Activated CD8-positive, alpha-beta T cell treated with anti-CD3 and anti-CD28 coated beads, Interleukin-2, amount 10 ng/mL, durations not matched to agents 7 days and 5 days (primary cell): ENCODE measurements at regions of chr14 and their contacts with region 1.

Region 1: GRCh38 chr14:59964251-59965007 is 44.5 kb downstream of the LRRC9 start:
- DNase-seq: peak; percentile 23
- ATAC-seq: peak; percentile 34
- H3K4me3 Mint-ChIP-seq: peak overlapping the region; percentile 76
- H3K27ac Mint-ChIP-seq: peak overlapping the region; percentile 84
- H3K4me1 Mint-ChIP-seq: peaks cover 20% of the 10 kb centered on the region
- H3K27me3 Mint-ChIP-seq: peaks cover 9% of the 10 kb centered on the region

Region 2: GRCh38 chr14:59836116-59836515 is 128.3 kb before region 1 on chr14:
- CTCF ChIA-PET with region 1: no interaction called
- POLR2A ChIA-PET with region 1: no interaction called
- DNase-seq: no peak
- ATAC-seq: no peak
- H3K4me3 Mint-ChIP-seq: no peak overlapping the region
- H3K27ac Mint-ChIP-seq: no peak overlapping the region
- H3K4me1 Mint-ChIP-seq: no peaks in the 10 kb centered on the region
- H3K27me3 Mint-ChIP-seq: peaks cover 27% of the 10 kb centered on the region

Region 3: DNA sequence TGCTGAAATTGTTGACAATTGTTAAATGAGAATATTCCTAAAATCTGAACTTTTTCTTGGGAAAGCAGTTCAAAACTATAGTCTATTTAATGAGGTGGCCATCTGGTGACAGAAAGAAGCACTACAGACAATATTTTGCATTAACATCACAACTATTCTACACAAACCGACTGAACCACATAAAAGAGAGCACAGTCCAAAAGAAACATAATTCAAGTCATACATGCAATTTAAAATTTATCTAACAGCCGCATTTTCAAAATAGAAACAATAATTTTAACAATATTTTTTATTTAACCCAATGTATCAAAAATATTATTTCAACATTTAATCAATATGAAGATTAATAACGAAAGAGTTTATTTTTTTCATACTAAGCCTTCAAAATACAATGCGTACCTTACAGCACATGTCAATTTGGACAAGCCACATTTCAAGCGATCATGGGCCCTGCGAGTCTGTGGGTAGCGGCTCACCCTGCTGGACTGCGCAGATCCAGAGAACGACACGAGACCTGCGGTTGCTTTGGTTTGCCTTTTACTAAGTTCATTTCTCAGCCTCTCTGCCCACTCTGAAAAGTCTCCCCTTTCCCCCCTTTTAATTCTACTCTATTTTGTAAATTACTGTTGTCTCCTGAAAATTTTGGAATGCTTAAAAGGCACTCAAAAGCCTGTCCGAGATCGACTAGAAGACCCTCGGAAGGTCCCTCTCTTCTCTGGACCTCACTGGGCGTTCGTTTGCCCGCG is 45.4 kb before region 1 on chr14:
- CTCF ChIA-PET with region 1: interaction called, 13 read pairs
- POLR2A ChIA-PET with region 1: no interaction called
- DNase-seq: peak; percentile 35
- ATAC-seq: peak; percentile 73
- H3K4me3 Mint-ChIP-seq: peak overlapping the region; percentile 60
- H3K27ac Mint-ChIP-seq: no peak overlapping the region
- H3K4me1 Mint-ChIP-seq: peaks cover 11% of the 10 kb centered on the region
- H3K27me3 Mint-ChIP-seq: peaks cover 27% of the 10 kb centered on the region

Region 4: GRCh38 chr14:59983048-59983447 is 18.6 kb after region 1 on chr14:
- CTCF ChIA-PET with region 1: interaction called, 14 read pairs
- POLR2A ChIA-PET with region 1: no interaction called
- DNase-seq: no peak
- ATAC-seq: no peak
- H3K4me3 Mint-ChIP-seq: no peak overlapping the region
- H3K27ac Mint-ChIP-seq: no peak overlapping the region
- H3K4me1 Mint-ChIP-seq: no peaks in the 10 kb centered on the region
- H3K27me3 Mint-ChIP-seq: no peaks in the 10 kb centered on the region

Region 5: GRCh38 chr14:60079724-60080123 is 115.3 kb after region 1 on chr14:
- CTCF ChIA-PET with region 1: no interaction called
- POLR2A ChIA-PET with region 1: no interaction called
- DNase-seq: no peak
- ATAC-seq: no peak
- H3K4me3 Mint-ChIP-seq: no peak overlapping the region
- H3K27ac Mint-ChIP-seq: no peak overlapping the region
- H3K4me1 Mint-ChIP-seq: no peaks in the 10 kb centered on the region
- H3K27me3 Mint-ChIP-seq: peaks cover 5% of the 10 kb centered on the region

Region 6: GRCh38 chr14:60248697-60249318 is 284.4 kb after region 1 on chr14 and contains the start of gene PPM1A:
- CTCF ChIA-PET with region 1: interaction called, 14 read pairs
- POLR2A ChIA-PET with region 1: interaction called, 9 read pairs
- DNase-seq: peak; percentile 95
- ATAC-seq: peak; percentile 74
- H3K4me3 Mint-ChIP-seq: peak within 1 kb of the TSS; percentile 93
- H3K27ac Mint-ChIP-seq: peak within 1 kb of the TSS; percentile 100
- H3K4me1 Mint-ChIP-seq: peaks cover 56% of the 10 kb centered on the region
- H3K27me3 Mint-ChIP-seq: no peaks in the 10 kb centered on the region
- total RNA-seq, gene PPM1A: 45.2 to 50.1 TPM